CD14-positive monocyte (primary cell): ENCODE measurements at regions of chr10 and their contacts with region 1.

Region 1: DNA sequence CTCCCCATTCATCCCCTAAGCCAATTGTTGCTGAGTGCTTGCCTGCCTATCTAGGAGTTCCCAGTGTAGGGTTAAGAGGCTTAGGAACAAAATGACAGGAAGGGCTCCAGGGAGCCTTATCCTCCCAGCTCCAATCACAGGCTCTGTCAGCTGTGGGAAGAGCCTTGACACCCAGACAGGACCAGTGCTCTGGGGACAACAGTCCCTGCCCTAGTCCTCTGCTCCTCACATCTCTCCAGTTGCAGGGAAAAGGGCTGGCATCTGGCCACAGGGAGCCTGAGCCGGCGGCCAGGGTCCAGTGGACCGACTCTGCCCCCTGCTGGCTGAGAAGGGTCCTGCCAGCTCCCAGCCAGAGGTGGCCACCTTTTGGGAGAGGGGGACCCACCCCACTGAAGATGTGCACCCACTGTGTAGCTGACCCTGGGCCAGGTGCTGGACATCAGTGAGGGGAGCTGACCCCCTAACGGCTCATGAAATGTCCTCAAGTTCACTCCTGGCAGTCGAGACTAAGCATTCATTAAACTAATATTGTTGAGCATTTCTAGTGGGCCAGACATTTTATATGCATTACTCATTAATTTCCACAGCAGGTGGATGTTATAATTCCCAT is 17.6 kb downstream of the DNAJB12 start:
- DNase-seq: peak; percentile 53 to 66 (median 64)
- H3K4me3 ChIP-seq: no peak overlapping the region
- H3K4me3 Mint-ChIP-seq: no peak overlapping the region
- H3K27ac ChIP-seq: no peak overlapping the region
- H3K27ac Mint-ChIP-seq: peak overlapping the region in 5 of 7 donors; percentile 15 to 78 (median 32)
- H3K4me1 ChIP-seq: peaks cover 45 to 54% of the 10 kb centered on the region in 2 donors
- H3K4me1 Mint-ChIP-seq: peaks cover 56% of the 10 kb centered on the region
- H3K27me3 ChIP-seq: no peaks in the 10 kb centered on the region
- H3K27me3 Mint-ChIP-seq: peaks cover 0 to 1% (median 0%) of the 10 kb centered on the region in 3 donors
- CTCF ChIP-seq: peak; percentile 99

Region 2: DNA sequence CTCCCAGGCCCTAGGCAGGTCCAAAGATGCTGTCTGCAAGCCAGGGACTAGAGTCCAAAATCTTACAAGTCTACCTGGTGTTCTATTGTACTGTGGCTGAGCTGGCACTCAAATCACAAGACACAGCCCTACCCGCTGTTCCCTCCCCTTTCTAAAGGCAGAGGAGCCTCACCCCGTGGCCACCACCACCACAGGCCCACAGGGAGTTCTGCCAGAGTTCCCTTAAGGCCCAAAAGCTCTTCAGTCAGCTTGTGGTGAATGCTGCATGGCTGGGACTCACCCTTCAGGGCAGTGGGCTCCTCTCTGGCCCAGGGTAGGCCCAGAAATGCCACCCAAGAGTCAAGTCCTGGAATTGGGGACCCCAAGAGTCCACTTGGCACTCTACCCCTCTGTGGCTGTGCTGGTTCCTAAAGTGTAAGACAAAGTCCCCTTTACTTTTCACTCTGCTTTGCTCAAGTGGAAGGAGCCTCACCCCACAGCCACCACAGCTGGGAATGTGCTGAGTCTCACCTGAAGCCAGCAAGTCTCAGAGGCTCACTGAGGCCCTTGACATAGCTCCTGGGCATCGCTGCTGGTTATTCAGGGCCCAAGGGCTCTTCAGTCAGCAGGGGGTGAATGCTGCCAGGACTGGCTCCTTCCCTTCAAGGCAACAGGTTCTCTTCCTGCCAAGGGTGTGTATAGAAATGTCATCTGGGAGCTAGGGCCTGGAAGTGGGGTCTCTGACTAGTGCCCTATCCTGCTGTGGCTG is 437.3 kb before region 1 on chr10:
- intact Hi-C with region 1: loop called (anchors 5 kb)
- DNase-seq: no peak
- H3K4me3 ChIP-seq: no peak overlapping the region
- H3K4me3 Mint-ChIP-seq: no peak overlapping the region
- H3K27ac ChIP-seq: no peak overlapping the region
- H3K27ac Mint-ChIP-seq: no peak overlapping the region
- H3K4me1 ChIP-seq: peaks cover 18 to 19% of the 10 kb centered on the region in 2 donors
- H3K4me1 Mint-ChIP-seq: peaks cover 15% of the 10 kb centered on the region
- H3K27me3 ChIP-seq: no peaks in the 10 kb centered on the region
- H3K27me3 Mint-ChIP-seq: peaks cover 0 to 6% (median 4%) of the 10 kb centered on the region in 3 donors
- CTCF ChIP-seq: no peak

Region 3: GRCh38 chr10:72058989-72059842 is 277.9 kb before region 1 on chr10:
- intact Hi-C with region 1: loop called in 1 of 2 experiments (anchors 10 kb)
- DNase-seq: no peak
- H3K4me3 ChIP-seq: no peak overlapping the region
- H3K4me3 Mint-ChIP-seq: no peak overlapping the region
- H3K27ac ChIP-seq: no peak overlapping the region
- H3K27ac Mint-ChIP-seq: no peak overlapping the region
- H3K4me1 ChIP-seq: no peaks in the 10 kb centered on the region
- H3K4me1 Mint-ChIP-seq: peaks cover 5% of the 10 kb centered on the region
- H3K27me3 ChIP-seq: no peaks in the 10 kb centered on the region
- H3K27me3 Mint-ChIP-seq: peaks cover 1 to 10% (median 3%) of the 10 kb centered on the region in 3 donors
- CTCF ChIP-seq: no peak

Region 4: DNA sequence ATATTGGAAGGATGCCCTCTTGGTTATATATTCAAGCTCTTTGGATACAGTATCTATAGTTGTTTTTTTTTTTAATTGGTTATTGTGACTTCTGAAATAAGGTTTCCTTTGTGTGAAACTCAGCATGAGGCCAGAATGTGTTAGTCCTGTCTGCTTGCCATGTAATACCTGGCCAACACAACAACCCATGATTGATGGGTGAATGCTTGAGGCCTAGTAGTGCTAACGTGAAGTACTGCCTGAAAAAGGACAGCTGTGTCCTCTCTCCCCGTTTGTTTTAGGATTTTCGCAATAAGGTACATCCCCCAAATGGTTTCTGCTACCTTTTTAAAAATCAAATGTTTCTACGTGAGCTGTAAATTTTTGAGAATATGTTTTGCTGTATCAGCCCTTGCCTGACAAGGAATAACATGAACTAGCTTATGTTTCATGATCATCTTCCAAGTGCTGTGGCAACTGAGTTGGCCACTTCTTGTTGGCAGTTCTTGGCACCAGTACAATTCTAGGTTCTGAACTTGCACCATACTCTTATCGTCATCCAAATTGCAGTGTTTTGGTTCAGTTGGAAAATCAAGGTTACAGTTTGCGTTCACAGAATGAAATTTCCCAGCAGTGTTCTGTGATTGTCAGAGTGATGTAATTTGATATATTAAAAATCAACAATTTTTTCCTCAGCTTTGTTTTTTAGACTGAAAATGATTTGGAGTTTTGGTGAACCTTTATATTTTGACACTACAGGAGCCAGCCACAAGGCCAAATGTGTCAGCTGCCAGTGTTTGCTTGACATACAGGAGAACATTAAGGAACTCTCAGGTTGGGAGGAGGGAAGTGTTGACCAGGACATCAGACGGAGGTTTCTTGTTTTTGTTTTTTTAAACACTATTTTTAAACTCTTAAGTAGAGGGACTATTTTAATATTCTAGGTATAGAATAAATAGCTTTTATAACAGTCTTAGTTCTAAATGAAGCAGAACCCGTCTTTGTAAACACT is 107.6 kb before region 1 on chr10:
- intact Hi-C with region 1: loop called in 1 of 2 experiments (anchors 10 kb)
- DNase-seq: peak in 2 of 3 donors; percentile 25 to 51
- H3K4me3 ChIP-seq: no peak overlapping the region
- H3K4me3 Mint-ChIP-seq: no peak overlapping the region
- H3K27ac ChIP-seq: peak overlapping the region in 1 of 2 donors; percentile 6
- H3K27ac Mint-ChIP-seq: peak overlapping the region in 6 of 7 donors; percentile 31 to 84 (median 54)
- H3K4me1 ChIP-seq: peaks cover 13 to 22% of the 10 kb centered on the region in 2 donors
- H3K4me1 Mint-ChIP-seq: peaks cover 18% of the 10 kb centered on the region
- H3K27me3 ChIP-seq: no peaks in the 10 kb centered on the region
- H3K27me3 Mint-ChIP-seq: no peaks in the 10 kb centered on the region
- CTCF ChIP-seq: no peak